ENCODE measurements at regions of chr1 and their contacts with region 1.

Region 1: GRCh38 chr1:24486331-24487065 is 16.1 kb upstream of the RCAN3 start:
- DNase-seq: peak; percentile 72 to 79 (median 75)
- H3K4me3 ChIP-seq: peak overlapping the region in 1 of 2 donors; percentile 21
- H3K4me3 Mint-ChIP-seq: peak overlapping the region; percentile 66 to 88 (median 82)
- H3K27ac ChIP-seq: peak overlapping the region; percentile 58
- H3K27ac Mint-ChIP-seq: peak overlapping the region; percentile 92 to 98 (median 93)
- H3K4me1 ChIP-seq: peaks cover 82% of the 10 kb centered on the region
- H3K4me1 Mint-ChIP-seq: peaks cover 50 to 82% (median 63%) of the 10 kb centered on the region in 4 donors
- H3K27me3 ChIP-seq: no peaks in the 10 kb centered on the region
- H3K27me3 Mint-ChIP-seq: no peaks in the 10 kb centered on the region

Region 2: DNA sequence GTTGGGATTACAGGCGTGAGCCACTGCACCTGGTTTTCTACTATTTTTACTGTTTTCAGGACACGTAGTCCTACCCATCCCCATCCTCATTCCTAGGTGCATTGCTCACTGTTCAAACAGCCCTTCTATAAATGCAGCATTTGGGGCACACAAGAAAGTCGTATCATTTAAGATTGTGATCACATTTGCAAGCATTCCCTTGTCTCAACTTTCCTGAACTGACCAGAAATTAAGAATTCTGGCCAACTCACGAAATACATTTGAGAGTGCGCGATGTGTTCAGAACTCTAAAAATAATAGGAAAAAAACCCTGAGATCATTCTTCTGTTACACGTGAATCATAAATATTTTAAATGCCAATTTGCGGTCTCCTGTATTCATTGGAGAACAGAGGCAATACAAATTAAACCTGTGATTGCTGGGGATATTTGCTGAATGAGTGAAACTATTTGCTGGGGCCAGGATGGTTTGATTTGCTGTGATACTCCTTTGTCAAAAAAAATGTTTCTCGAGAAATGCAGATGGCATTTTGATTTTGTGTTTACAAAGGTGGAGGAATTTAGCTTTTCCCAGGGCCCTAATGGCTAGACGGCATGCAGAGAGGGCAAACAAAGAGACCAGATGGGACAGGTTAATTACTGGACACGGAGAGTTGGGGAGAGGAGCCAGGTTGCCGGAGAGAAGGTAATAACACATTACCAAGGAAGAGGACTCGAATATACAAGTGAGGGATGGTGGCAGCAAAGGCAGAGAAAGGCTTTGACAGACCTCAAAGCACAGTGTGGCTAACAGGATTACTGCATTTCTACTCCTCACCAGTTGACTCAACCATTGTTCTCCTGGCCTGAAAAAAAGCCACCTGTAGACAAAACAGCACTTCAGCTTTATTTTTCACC is 111.4 kb before region 1 on chr1:
- CTCF ChIA-PET with region 1: no interaction called
- POLR2A ChIA-PET with region 1: no interaction called
- intact Hi-C with region 1: no loop called
- DNase-seq: no peak
- H3K4me3 ChIP-seq: no peak overlapping the region
- H3K4me3 Mint-ChIP-seq: no peak overlapping the region
- H3K27ac ChIP-seq: no peak overlapping the region
- H3K27ac Mint-ChIP-seq: no peak overlapping the region
- H3K4me1 ChIP-seq: no peaks in the 10 kb centered on the region
- H3K4me1 Mint-ChIP-seq: no peaks in the 10 kb centered on the region
- H3K27me3 ChIP-seq: no peaks in the 10 kb centered on the region
- H3K27me3 Mint-ChIP-seq: no peaks in the 10 kb centered on the region

Region 3: DNA sequence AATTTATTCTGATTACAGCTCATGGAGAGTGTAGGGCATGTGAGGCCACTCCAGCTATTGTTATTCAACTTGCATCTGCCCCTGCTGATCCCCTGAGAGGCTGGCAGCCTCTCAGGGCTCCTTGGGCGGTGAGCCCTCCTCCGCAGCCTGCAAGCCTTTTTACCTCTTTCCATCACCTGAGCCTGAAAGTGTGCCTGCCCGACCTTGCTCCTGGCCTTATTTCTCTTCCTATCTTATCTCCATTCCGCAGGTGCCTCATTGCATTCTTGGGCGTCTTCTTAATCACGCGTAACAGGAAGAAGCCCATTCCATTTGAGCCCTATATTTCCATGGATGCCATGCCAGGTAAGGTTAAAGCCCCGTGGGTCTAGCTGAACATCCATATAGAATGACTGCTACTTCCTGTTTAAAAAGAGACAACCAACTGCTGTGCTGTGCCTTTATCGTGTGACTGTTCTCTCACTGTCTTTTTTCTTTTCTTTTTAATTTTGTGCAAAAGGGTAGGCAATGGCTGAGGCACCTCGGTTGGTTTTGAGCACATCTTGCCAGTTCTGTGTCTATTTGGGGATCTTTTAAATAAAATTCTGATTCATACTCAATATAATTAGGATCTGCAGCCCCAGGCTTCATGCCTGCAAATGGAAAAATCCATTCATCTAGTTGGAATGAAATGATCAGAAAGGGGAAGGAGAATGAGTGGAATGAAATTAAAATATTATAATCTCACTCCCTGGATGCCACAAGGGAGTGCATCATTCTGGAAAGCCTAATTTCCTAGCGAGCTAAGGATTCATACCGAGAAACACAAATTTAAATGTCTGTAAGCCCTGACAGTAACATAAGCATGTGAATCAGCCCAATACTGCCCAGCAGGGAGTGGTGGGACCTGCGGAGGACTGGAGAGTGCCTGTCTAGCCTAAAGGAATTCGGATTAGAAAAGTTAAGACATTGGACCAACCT is 22.4 kb before region 1 on chr1:
- CTCF ChIA-PET with region 1: interaction called, 11 read pairs
- POLR2A ChIA-PET with region 1: interaction called, 19 read pairs
- intact Hi-C with region 1: no loop called
- DNase-seq: no peak
- H3K4me3 ChIP-seq: no peak overlapping the region
- H3K4me3 Mint-ChIP-seq: no peak overlapping the region
- H3K27ac ChIP-seq: no peak overlapping the region
- H3K27ac Mint-ChIP-seq: peak overlapping the region in 6 of 7 donors; percentile 28 to 93 (median 67)
- H3K4me1 ChIP-seq: peaks cover 4% of the 10 kb centered on the region
- H3K4me1 Mint-ChIP-seq: peaks cover 12 to 26% (median 18%) of the 10 kb centered on the region in 4 donors
- H3K27me3 ChIP-seq: no peaks in the 10 kb centered on the region
- H3K27me3 Mint-ChIP-seq: no peaks in the 10 kb centered on the region

Region 4: DNA sequence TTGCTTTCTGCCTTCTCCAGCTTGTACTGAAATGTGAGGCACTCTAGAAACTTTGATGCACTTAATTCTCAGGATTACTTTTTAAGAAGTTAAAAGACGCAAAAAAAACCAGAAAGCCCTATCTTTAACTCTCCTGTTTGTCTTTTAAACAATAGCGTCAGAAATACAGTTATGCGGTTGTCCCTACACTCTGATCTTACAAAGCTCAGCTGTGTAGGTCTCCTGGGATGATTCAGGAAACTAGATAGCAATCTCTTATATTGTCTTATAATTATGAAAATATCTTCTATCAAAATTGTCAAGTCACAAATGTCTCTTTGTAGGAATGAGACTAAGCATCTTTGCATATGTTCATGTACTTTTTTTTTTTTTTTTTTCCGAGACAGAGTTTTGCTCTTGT is 10.8 kb before region 1 on chr1:
- CTCF ChIA-PET with region 1: interaction called, 7 read pairs
- POLR2A ChIA-PET with region 1: interaction called, 17 read pairs
- intact Hi-C with region 1: no loop called
- DNase-seq: peak in 1 of 5 donors; percentile 25
- H3K4me3 ChIP-seq: no peak overlapping the region
- H3K4me3 Mint-ChIP-seq: no peak overlapping the region
- H3K27ac ChIP-seq: no peak overlapping the region
- H3K27ac Mint-ChIP-seq: peak overlapping the region; percentile 30 to 73 (median 41)
- H3K4me1 ChIP-seq: peaks cover 15% of the 10 kb centered on the region
- H3K4me1 Mint-ChIP-seq: peaks cover 9 to 32% (median 16%) of the 10 kb centered on the region in 4 donors
- H3K27me3 ChIP-seq: no peaks in the 10 kb centered on the region
- H3K27me3 Mint-ChIP-seq: no peaks in the 10 kb centered on the region